ENCODE measurements at regions of chr1 and their contacts with region 1.

Region 1: DNA sequence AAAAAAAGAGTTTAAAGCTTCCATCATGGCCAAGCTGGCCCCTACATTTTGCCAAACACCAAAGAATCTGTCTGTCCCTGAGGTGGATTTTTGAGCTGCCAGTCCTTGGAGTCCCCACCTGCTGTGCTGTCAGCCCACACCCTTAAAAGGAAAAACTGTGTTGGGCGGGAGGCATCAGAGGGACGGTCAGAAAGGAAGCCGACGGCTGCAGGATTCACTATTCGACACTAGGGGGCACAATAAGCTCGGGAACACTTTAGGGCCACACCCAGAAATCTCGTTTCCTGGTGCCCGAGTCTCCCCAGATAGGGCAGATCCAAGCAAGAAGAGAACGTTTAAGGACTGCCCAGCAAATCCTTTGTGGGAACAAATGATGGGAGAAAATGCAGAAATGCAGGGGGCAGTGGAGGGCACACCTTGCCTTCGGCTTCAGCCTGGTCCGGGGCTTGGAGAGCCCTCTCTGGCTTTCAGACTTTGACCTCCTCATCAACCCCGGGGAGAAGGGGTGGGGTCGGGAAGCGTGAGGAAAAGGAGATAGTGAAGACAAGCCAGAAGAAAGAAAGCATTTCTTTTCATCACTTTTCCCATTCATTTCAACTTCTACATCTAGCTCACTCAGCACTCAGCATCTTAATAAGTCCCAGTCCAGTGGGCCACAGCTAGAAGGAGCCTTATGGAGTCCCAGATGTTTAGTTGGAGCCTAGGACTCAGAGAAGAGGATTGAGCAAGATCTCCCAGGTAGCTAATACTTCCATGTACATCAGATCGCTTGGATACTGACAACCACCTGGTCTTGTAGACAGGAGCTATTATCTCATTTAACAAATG is 5.0 kb upstream of the CTTNBP2NL start:
- DNase-seq: peak; percentile 89 to 92
- H3K4me3 ChIP-seq: peak overlapping the region; percentile 33 to 64 (median 52)
- H3K27ac ChIP-seq: peak overlapping the region; percentile 78 to 91
- H3K4me1 ChIP-seq: peaks cover 4 to 11% of the 10 kb centered on the region in 2 donors
- H3K27me3 ChIP-seq: no peaks in the 10 kb centered on the region
- CTCF ChIP-seq: peak; percentile 93 to 98 (median 94)
- POLR2A ChIP-seq: no peak

Region 2: GRCh38 chr1:110619412-110620249 is 1771.4 kb before region 1 on chr1:
- intact Hi-C with region 1: loop called (anchors 10 kb)
- DNase-seq: peak; percentile 70 to 73
- H3K4me3 ChIP-seq: peak overlapping the region in 2 of 3 donors; percentile 35 to 57
- H3K27ac ChIP-seq: peak overlapping the region in 1 of 2 donors; percentile 33
- H3K4me1 ChIP-seq: no peaks in the 10 kb centered on the region
- H3K27me3 ChIP-seq: peaks cover 0 to 9% of the 10 kb centered on the region in 2 donors
- CTCF ChIP-seq: peak; percentile 86 to 93 (median 86)
- POLR2A ChIP-seq: no peak

Region 3: DNA sequence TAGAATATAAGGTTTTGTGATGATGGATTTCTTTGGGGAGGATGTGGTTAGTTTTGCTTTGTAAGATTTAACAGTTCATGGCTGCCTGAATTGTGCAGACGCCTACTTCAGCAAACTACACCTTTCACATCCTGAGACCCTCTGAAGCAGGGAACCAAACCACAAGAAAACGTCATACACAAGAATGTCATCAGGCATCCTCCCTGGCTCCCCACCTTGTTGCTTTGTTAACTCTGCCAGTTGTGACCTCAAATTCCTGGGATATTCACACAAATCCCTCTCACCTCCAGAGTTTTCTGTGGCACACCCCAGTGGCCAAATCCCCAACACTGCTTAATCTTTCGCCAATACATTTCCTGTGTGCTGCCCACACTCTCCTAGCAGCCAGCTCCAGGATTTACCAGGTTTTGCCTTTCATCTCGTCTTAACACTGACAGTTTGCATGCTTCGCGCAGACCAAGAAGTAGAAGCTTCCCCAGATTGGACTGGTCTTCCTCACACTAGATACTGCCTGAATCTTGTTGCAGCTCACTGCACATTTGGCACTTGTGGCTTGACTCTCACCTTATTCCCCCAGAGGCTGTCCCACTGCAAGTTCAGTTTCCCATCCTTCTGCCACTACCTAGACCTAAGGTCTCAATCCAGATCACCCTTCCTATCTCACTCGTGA is 46.1 kb before region 1 on chr1:
- intact Hi-C with region 1: no loop called
- DNase-seq: no peak
- H3K4me3 ChIP-seq: no peak overlapping the region
- H3K27ac ChIP-seq: no peak overlapping the region
- H3K4me1 ChIP-seq: no peaks in the 10 kb centered on the region
- H3K27me3 ChIP-seq: no peaks in the 10 kb centered on the region
- CTCF ChIP-seq: no peak
- POLR2A ChIP-seq: no peak

Region 4: DNA sequence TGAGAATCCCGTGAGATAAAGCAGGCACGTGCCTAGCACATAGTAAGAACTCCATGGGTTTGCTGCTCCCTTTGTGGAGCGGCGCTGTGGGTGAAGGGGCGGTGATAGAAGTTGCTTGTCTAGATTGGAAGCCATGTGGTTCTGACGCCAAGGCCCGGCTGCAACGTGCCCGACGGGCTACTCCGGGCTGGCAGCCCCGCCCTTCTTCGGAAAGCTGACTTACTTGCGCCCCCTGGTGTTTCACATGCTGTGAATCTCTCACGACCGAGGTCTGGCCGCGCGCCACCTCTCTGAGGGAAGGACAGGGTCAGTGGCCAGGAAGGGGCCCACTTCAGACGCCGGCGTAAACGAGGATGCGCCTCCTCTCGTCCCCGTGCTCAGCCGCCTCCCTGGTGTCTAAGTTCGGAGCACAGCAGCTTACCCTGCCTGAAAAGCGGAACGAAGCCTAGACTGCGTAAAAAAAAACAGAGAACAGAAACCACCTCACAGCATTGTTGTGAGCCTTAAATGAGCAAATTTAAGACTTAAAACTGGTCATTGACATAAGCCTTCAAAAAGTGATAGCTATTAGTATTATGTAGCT is 75.2 kb after region 1 on chr1:
- intact Hi-C with region 1: loop called (anchors 10 kb)
- DNase-seq: peak; percentile 88 to 94
- H3K4me3 ChIP-seq: peak overlapping the region; percentile 32 to 56 (median 52)
- H3K27ac ChIP-seq: peak overlapping the region; percentile 91 to 92
- H3K4me1 ChIP-seq: peaks cover 0 to 7% of the 10 kb centered on the region in 2 donors
- H3K27me3 ChIP-seq: no peaks in the 10 kb centered on the region
- CTCF ChIP-seq: peak; percentile 87 to 94 (median 91)
- POLR2A ChIP-seq: no peak

Region 5: DNA sequence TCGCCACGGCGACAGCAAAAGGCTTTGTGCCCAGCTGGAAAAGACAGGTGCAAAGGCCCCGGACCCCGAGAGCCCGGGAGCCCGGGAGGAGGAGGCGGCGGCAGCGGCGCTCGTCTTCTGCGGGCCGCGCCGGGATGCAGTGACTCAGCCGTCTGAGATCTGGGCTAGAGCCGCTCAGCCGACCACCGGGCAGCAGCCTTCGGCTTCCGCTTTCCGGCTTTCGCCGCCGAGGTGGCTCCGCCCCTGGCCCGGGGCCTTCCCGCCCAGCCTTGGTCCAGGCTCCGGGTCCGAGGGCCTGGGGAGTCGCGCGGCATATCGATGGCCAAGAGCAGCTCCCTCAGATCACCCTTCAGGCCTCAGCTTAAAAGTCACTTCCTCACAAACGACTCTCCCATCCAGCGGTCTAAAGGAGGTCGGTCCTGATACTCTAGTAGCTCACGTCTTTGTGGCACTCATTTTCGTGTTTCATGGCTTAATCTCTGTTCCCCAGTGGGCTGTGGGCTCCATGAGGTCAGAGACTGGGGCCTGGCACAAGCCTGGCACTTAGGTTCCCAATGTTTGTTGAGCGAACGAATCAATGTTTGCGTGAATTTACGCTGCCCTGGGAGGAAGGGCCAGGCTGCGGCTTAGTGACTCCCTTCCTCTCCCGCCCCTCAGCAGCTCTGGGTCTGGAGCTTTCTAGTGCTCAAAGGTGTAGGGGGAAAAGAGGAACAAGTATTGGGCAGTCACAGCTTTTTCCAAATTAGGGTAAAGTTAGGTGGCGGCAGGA is 1368.5 kb after region 1 on chr1 and contains the start of gene PHTF1:
- intact Hi-C with region 1: no loop called
- DNase-seq: peak; percentile 26 to 58
- H3K4me3 ChIP-seq: peak within 1 kb of the TSS; percentile 92 to 97 (median 95)
- H3K27ac ChIP-seq: peak within 1 kb of the TSS; percentile 91 to 92
- H3K4me1 ChIP-seq: no peaks in the 10 kb centered on the region
- H3K27me3 ChIP-seq: no peaks in the 10 kb centered on the region
- CTCF ChIP-seq: no peak
- POLR2A ChIP-seq: no peak
- total RNA-seq, gene PHTF1: 13.8 to 18.4 (median 16.4) TPM

Measured in breast epithelium (tissue), 4 donors.